ENCODE measurements at regions of chr2 and their contacts with region 1.

Region 1: DNA sequence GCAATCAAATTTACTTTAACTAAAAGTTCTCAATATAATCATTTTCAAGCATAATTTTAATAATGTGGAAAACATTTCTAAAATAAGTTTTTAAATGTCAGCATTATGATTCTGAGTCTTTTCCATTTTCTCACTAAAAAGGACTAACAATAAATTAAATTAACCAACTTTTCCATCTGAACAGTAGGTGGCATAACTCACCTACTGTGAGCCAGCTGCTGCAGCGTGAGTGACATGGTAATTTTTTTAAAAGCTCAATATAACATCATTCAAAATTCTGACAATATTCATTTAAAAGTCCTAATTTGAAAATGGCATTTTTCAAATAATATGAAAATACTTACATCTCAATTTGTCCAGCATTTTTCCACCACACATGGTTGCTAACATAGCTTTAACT is 66.5 kb downstream of the DTNB start:
- DNase-seq: no peak
- H3K4me3 ChIP-seq: no peak overlapping the region
- H3K27ac ChIP-seq: no peak overlapping the region
- H3K4me1 ChIP-seq: no peaks in the 10 kb centered on the region
- H3K27me3 ChIP-seq: no peaks in the 10 kb centered on the region
- CTCF ChIP-seq: peak; percentile 30 to 58 (median 48)
- EP300 ChIP-seq: no peak
- POLR2A ChIP-seq: no peak

Region 2: GRCh38 chr2:25664183-25664964 is 57.5 kb after region 1 on chr2:
- in situ Hi-C with region 1: loop called in 1 of 4 experiments (anchors 10 kb)
- intact Hi-C with region 1: no loop called
- DNase-seq: peak; percentile 59
- H3K4me3 ChIP-seq: no peak overlapping the region
- H3K27ac ChIP-seq: no peak overlapping the region
- H3K4me1 ChIP-seq: no peaks in the 10 kb centered on the region
- H3K27me3 ChIP-seq: no peaks in the 10 kb centered on the region
- CTCF ChIP-seq: peak; percentile 44 to 58 (median 54)
- EP300 ChIP-seq: no peak
- POLR2A ChIP-seq: no peak

Region 3: GRCh38 chr2:25690058-25690457 is 83.2 kb after region 1 on chr2:
- in situ Hi-C with region 1: no loop called
- intact Hi-C with region 1: loop called (anchors 10 kb)
- DNase-seq: no peak
- H3K4me3 ChIP-seq: no peak overlapping the region
- H3K27ac ChIP-seq: no peak overlapping the region
- H3K4me1 ChIP-seq: no peaks in the 10 kb centered on the region
- H3K27me3 ChIP-seq: no peaks in the 10 kb centered on the region
- CTCF ChIP-seq: no peak
- EP300 ChIP-seq: no peak
- POLR2A ChIP-seq: no peak